ENCODE measurements at regions of chr4 and their contacts with region 1.

Region 1: GRCh38 chr4:80362578-80363181 is 27.1 kb downstream of the CFAP299 start:
- DNase-seq: peak; percentile 4
- ATAC-seq: peak; percentile 76
- H3K4me3 ChIP-seq: no peak overlapping the region
- H3K27ac ChIP-seq: no peak overlapping the region
- H3K4me1 ChIP-seq: no peaks in the 10 kb centered on the region
- H3K27me3 ChIP-seq: peaks cover 23% of the 10 kb centered on the region
- CTCF ChIP-seq: peak; percentile 42 to 68 (median 66); a peak in 4 of 6 replicates
- POLR2A ChIP-seq: no peak
- RAD21 ChIP-seq: peak; percentile 71

Region 2: DNA sequence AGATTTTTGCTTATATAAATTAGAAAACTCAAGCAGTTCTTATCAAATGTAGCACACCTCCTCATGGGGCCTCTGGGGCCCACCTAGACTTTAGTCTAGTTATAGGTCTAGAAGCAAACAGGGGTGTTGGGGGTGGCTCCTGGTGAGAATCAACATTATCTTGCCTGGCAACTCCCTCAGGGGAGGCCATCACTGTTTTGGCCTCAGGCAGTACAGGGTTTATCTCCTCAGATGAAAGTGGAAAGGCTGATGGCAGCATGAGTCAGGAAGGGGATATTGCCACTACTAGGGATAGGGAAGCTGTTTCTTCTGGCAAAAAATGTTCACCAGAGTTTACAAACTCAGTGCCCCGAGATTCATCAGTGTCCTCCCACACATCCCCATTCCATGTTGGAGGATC is 435.4 kb after region 1 on chr4:
- CTCF ChIA-PET with region 1: no interaction called
- POLR2A ChIA-PET with region 1: no interaction called
- RAD21 ChIA-PET with region 1: no interaction called
- intact Hi-C with region 1: no loop called
- DNase-seq: no peak
- ATAC-seq: no peak
- H3K4me3 ChIP-seq: no peak overlapping the region
- H3K27ac ChIP-seq: no peak overlapping the region
- H3K4me1 ChIP-seq: no peaks in the 10 kb centered on the region
- H3K27me3 ChIP-seq: no peaks in the 10 kb centered on the region
- CTCF ChIP-seq: no peak
- POLR2A ChIP-seq: no peak
- RAD21 ChIP-seq: no peak

Region 3: GRCh38 chr4:80989921-80990544 is 627.4 kb after region 1 on chr4:
- CTCF ChIA-PET with region 1: interaction called, 23 read pairs
- POLR2A ChIA-PET with region 1: no interaction called
- RAD21 ChIA-PET with region 1: no interaction called
- intact Hi-C with region 1: loop called (anchors 1 kb)
- DNase-seq: peak; percentile 50
- ATAC-seq: peak; percentile 78
- H3K4me3 ChIP-seq: no peak overlapping the region
- H3K27ac ChIP-seq: no peak overlapping the region
- H3K4me1 ChIP-seq: no peaks in the 10 kb centered on the region
- H3K27me3 ChIP-seq: peaks cover 20% of the 10 kb centered on the region
- CTCF ChIP-seq: peak; percentile 39 to 73 (median 63); a peak in 5 of 6 replicates
- POLR2A ChIP-seq: no peak
- RAD21 ChIP-seq: peak; percentile 50

Region 4: GRCh38 chr4:81040012-81040659 is 677.5 kb after region 1 on chr4:
- CTCF ChIA-PET with region 1: interaction called, 12 read pairs
- POLR2A ChIA-PET with region 1: no interaction called
- RAD21 ChIA-PET with region 1: no interaction called
- intact Hi-C with region 1: no loop called
- DNase-seq: no peak
- ATAC-seq: peak; percentile 57
- H3K4me3 ChIP-seq: no peak overlapping the region
- H3K27ac ChIP-seq: no peak overlapping the region
- H3K4me1 ChIP-seq: no peaks in the 10 kb centered on the region
- H3K27me3 ChIP-seq: peaks cover 45% of the 10 kb centered on the region
- CTCF ChIP-seq: peak; percentile 53 to 76 (median 65); a peak in 5 of 6 replicates
- POLR2A ChIP-seq: no peak
- RAD21 ChIP-seq: peak; percentile 71

Region 5: GRCh38 chr4:81052119-81053068 is 689.7 kb after region 1 on chr4:
- CTCF ChIA-PET with region 1: interaction called, 16 read pairs
- POLR2A ChIA-PET with region 1: no interaction called
- RAD21 ChIA-PET with region 1: no interaction called
- intact Hi-C with region 1: loop called (anchors 1 kb)
- DNase-seq: peak; percentile 59
- ATAC-seq: peak; percentile 99
- H3K4me3 ChIP-seq: no peak overlapping the region
- H3K27ac ChIP-seq: no peak overlapping the region
- H3K4me1 ChIP-seq: no peaks in the 10 kb centered on the region
- H3K27me3 ChIP-seq: peaks cover 48% of the 10 kb centered on the region
- CTCF ChIP-seq: peak; percentile 48 to 79 (median 75); a peak in 5 of 6 replicates
- POLR2A ChIP-seq: no peak
- RAD21 ChIP-seq: peak; percentile 70

Region 6: DNA sequence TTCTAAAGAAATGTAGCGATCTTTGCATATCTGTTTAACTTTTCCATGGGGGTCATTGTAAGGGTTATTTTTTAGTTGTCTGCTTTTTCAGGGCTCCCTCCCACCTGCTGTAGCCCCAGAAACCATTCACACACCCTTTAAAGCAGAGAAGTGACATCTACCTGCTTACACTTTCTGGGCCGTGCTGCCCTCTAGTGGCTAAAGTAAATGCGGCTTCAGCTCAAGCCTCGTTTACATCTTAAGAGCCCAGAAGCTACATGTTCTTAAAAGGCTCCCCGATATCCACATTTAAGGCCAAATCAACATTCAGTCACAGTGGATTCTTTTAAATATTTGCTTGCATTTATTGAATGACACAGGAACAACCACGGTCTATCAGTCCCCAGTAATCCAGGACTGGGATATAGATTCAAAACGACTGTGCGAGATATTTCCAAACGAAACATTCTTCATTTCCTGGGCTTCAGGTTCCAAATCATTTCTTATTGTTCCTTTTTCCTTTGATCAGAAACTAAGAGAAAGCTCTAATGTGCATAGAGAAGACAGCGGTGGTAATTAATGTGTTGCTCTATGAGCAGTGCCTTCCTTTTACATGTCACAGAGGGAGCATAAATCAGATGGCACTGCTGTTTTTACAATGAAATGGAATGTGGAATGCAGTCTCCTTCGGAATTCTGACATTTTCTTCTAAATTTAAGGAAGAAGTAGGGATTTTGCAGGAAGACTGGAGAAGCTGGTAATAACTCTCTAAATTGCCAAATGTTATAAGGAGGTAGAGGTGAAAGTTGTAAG is 989.2 kb after region 1 on chr4:
- CTCF ChIA-PET with region 1: interaction called, 3 read pairs
- POLR2A ChIA-PET with region 1: no interaction called
- RAD21 ChIA-PET with region 1: no interaction called
- intact Hi-C with region 1: loop called (anchors 5 kb)
- DNase-seq: peak; percentile 70
- ATAC-seq: peak; percentile 91
- H3K4me3 ChIP-seq: no peak overlapping the region
- H3K27ac ChIP-seq: no peak overlapping the region
- H3K4me1 ChIP-seq: no peaks in the 10 kb centered on the region
- H3K27me3 ChIP-seq: peaks cover 26% of the 10 kb centered on the region
- CTCF ChIP-seq: peak; percentile 71 to 95 (median 89); a peak in 5 of 6 replicates
- POLR2A ChIP-seq: no peak
- RAD21 ChIP-seq: peak; percentile 84